ENCODE measurements at regions of chr15 and their contacts with region 1.

Region 1: GRCh38 chr15:53038655-53038941 is 248.5 kb upstream of the ONECUT1 start:
- DNase-seq: no peak
- ATAC-seq: no peak
- H3K4me3 ChIP-seq: no peak overlapping the region
- H3K27ac ChIP-seq: no peak overlapping the region
- H3K4me1 ChIP-seq: no peaks in the 10 kb centered on the region
- H3K27me3 ChIP-seq: peaks cover 0 to 12% (median 0%) of the 10 kb centered on the region in 9 donors
- CTCF ChIP-seq: no peak
- POLR2A ChIP-seq: no peak

Region 2: DNA sequence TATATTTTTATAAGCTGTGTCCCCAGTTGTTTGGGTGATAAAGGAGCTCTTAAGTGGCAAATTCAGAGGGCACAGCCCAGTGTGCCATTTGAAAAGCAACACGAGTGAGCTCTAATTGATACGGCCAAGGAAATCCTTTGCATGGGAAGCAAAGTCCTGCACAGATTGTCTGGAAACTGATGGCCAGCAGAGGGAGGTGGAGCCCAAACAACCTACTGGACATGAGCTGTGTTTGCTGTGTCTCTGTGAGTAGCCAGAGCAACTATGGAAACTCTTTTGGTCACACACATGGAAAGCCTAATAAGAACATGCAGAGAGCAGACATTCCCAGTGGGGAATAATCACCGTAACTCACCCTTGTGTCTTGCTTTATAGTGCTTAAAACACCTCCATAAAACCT is 272.8 kb before region 1 on chr15:
- intact Hi-C with region 1: no loop called
- DNase-seq: no peak
- ATAC-seq: no peak
- H3K4me3 ChIP-seq: no peak overlapping the region
- H3K27ac ChIP-seq: no peak overlapping the region
- H3K4me1 ChIP-seq: no peaks in the 10 kb centered on the region
- H3K27me3 ChIP-seq: peaks cover 0 to 45% (median 5%) of the 10 kb centered on the region in 9 donors
- CTCF ChIP-seq: no peak
- POLR2A ChIP-seq: no peak

Region 3: DNA sequence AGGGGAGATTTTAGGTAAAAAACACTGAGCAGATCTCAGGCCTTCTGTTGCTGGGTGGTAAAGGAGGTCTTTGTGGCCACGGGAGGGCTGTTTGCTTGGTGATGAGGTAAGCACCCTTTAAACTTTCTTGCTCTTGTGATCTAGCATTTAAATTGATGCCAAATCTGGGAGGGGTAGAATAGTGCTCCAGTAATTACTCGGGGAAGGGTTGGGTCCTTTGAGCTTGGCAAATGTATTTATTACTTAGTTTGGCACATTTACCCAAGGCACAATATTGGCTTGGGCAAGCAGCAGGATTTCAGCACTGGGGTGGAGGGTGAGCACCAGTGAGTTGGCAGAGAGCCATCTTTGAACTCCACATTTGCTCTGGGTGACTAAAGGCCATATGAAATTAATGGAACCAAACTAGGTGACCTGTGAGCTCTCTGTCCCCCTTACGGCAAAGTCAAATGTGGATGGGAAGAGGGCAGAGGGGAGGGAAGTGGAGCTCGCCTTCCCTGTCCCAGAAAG is 62.6 kb before region 1 on chr15:
- intact Hi-C with region 1: loop called in 1 of 10 experiments (anchors 10 kb)
- DNase-seq: no peak
- ATAC-seq: no peak
- H3K4me3 ChIP-seq: no peak overlapping the region
- H3K27ac ChIP-seq: no peak overlapping the region
- H3K4me1 ChIP-seq: no peaks in the 10 kb centered on the region
- H3K27me3 ChIP-seq: no peaks in the 10 kb centered on the region
- CTCF ChIP-seq: no peak
- POLR2A ChIP-seq: no peak

Region 4: GRCh38 chr15:53080484-53080883 is 41.9 kb after region 1 on chr15:
- intact Hi-C with region 1: loop called in 1 of 10 experiments (anchors 5 kb)
- DNase-seq: no peak
- ATAC-seq: no peak
- H3K4me3 ChIP-seq: no peak overlapping the region
- H3K27ac ChIP-seq: no peak overlapping the region
- H3K4me1 ChIP-seq: no peaks in the 10 kb centered on the region
- H3K27me3 ChIP-seq: no peaks in the 10 kb centered on the region
- CTCF ChIP-seq: no peak
- POLR2A ChIP-seq: no peak